Panc1 (cell line): ENCODE measurements at regions of chr21 and their contacts with region 1.

Region 1: GRCh38 chr21:44353191-44353970 is at the start of gene TRPM2:
- DNase-seq: no peak
- ATAC-seq: no peak
- H3K4me3 ChIP-seq: no peak within 1 kb of the TSS
- H3K27ac ChIP-seq: no peak within 1 kb of the TSS
- H3K4me1 ChIP-seq: no peaks in the 10 kb centered on the region
- H3K27me3 ChIP-seq: no peaks in the 10 kb centered on the region
- CTCF ChIP-seq: no peak
- total RNA-seq, gene TRPM2: 0.26 TPM

Region 2: DNA sequence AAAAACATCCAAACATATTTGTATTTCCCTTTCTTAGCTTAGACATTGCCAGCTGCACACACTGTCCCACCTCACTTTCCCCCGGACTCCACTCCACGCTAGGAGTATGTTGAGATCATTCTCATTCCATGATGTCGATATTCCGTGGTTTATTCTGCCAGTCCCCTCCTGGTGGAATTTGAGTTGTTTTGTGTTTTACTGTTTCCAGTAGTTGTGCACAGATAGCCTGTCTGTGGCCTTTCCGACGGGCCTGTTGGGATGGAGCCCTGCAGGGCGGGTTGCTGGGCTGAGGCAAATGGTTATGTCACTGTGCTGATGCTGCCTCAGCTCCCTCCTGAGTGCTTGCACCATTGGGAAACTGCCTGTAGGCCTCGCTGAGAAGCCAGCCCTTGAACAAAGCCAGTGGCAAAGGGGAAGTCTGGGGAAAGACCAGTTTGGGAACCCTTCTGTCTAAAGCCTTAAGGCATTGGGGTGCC is 328.5 kb before region 1 on chr21:
- CTCF ChIA-PET with region 1: no interaction called
- POLR2A ChIA-PET with region 1: no interaction called
- in situ Hi-C with region 1: no loop called
- intact Hi-C with region 1: no loop called
- DNase-seq: no peak
- ATAC-seq: 0 out of 2 replicates have a peak, but pooled peaks have one; percentile 26
- H3K4me3 ChIP-seq: no peak overlapping the region
- H3K27ac ChIP-seq: no peak overlapping the region
- H3K4me1 ChIP-seq: no peaks in the 10 kb centered on the region; the same call in 1 of the 2 replicates
- H3K27me3 ChIP-seq: no peaks in the 10 kb centered on the region
- CTCF ChIP-seq: no peak

Region 3: GRCh38 chr21:44338971-44339910 is 14.1 kb before region 1 on chr21 and contains the start of gene CFAP410:
- CTCF ChIA-PET with region 1: interaction called, 12 read pairs
- POLR2A ChIA-PET with region 1: no interaction called
- in situ Hi-C with region 1: no loop called
- intact Hi-C with region 1: no loop called
- DNase-seq: peak; percentile 33
- ATAC-seq: peak; percentile 97
- H3K4me3 ChIP-seq: peak within 1 kb of the TSS; percentile 83 to 86
- H3K27ac ChIP-seq: peak within 1 kb of the TSS; percentile 96
- H3K4me1 ChIP-seq: peaks cover 4% of the 10 kb centered on the region; the same call in 1 of the 2 replicates
- H3K27me3 ChIP-seq: no peaks in the 10 kb centered on the region
- CTCF ChIP-seq: no peak
- total RNA-seq, gene CFAP410: 11.8 TPM